Activated CD8-positive, alpha-beta memory T cell treated with anti-CD3 and anti-CD28 coated beads, Interleukin-2, amount 10 ng/mL, durations not matched to agents 7 days and 5 days (primary cell): ENCODE measurements at regions of chrX and their contacts with region 1.

Region 1: GRCh38 chrX:150587585-150588503 is 19.4 kb downstream of the MTM1 start:
- DNase-seq: peak; percentile 59
- ATAC-seq: peak; percentile 47
- H3K4me3 Mint-ChIP-seq: no peak overlapping the region
- H3K27ac Mint-ChIP-seq: no peak overlapping the region
- H3K4me1 Mint-ChIP-seq: peaks cover 22% of the 10 kb centered on the region
- H3K27me3 Mint-ChIP-seq: no peaks in the 10 kb centered on the region

Region 2: DNA sequence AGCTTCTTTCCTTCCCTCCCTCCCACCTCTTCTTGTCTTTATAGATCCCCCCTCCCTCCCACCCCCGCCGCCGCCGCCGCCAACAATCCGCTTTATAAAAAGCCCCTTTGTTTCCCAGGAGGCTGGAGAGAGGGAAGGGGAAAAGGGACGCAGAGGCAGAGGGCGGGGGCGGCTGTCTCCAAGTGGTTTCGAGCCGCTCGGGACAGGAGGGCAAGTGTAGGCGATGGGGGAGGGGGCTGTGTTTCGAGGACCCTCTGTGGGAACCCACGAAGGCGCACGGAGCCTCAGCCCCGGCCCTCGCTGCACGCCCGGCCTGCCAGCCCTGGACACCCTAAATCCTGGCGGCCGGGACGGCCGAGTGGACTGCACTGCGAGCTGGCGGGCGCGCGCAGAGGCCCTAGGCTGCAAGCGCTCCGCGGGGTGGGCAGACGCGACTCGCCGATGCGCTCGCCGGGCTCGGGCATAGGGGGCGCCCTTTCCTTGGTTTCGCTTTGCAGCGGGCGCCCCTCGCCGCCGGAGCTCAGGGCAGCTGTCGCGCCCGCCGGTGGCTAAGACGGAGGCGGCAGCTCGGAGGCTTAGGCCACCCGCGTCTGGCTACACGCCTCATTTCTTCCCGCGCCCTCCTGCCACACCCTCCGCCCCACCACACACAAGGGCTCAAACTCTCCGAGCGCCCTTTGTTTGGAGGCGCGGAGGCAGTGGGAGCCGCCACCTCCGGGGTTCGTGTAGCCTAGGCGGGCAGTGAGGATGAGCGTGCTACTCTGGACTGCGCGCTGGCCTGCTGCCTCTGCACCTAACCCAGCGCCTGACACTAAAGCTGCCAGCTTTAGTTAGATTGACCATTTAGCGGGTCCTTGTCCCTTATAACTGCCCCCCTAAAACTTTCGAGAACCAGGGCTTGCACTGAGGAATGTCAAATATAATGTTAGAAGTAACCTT is 222.5 kb before region 1 on chrX:
- CTCF ChIA-PET with region 1: interaction called, 11 read pairs
- DNase-seq: peak; percentile 79
- ATAC-seq: peak; percentile 46
- H3K4me3 Mint-ChIP-seq: peak overlapping the region; percentile 77
- H3K27ac Mint-ChIP-seq: peak overlapping the region; percentile 74
- H3K4me1 Mint-ChIP-seq: peaks cover 24% of the 10 kb centered on the region
- H3K27me3 Mint-ChIP-seq: peaks cover 19% of the 10 kb centered on the region

Region 3: DNA sequence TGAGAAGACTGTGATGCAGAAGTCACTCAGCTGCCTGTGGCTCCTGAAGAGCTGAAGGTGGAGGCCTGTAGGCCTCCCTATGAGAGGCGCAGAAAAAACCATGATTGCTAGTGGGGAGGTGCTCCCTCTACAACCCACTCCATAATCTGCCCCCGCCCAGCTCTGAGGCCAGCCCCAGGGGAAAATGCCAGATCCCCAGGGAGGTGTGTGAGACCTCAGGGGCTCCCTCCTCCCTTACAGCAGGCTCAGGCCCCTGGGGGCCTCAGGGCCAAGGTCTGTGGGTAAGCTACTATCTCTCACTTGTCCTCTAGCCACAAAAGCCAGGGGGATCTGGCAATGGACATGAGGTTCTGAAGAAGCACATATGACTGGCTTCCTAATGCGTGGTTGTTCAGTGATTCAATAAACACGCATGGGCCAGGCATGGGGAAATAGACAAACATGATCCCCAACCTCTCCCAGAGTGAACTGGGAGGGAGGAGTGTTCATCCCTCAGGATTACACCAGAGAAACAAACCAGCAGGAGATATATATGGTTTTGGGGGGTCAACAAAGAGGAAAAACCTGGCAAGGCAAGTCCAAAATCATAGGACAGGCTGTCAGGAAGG is 70.4 kb before region 1 on chrX:
- CTCF ChIA-PET with region 1: no interaction called
- DNase-seq: no peak
- ATAC-seq: no peak
- H3K4me3 Mint-ChIP-seq: no peak overlapping the region
- H3K27ac Mint-ChIP-seq: no peak overlapping the region
- H3K4me1 Mint-ChIP-seq: peaks cover 7% of the 10 kb centered on the region
- H3K27me3 Mint-ChIP-seq: no peaks in the 10 kb centered on the region

Region 4: GRCh38 chrX:150570512-150570911 is 17.3 kb before region 1 on chrX:
- CTCF ChIA-PET with region 1: interaction called, 11 read pairs
- DNase-seq: no peak
- ATAC-seq: no peak
- H3K4me3 Mint-ChIP-seq: peak overlapping the region; percentile 81
- H3K27ac Mint-ChIP-seq: peak overlapping the region; percentile 90
- H3K4me1 Mint-ChIP-seq: peaks cover 55% of the 10 kb centered on the region
- H3K27me3 Mint-ChIP-seq: no peaks in the 10 kb centered on the region

Region 5: DNA sequence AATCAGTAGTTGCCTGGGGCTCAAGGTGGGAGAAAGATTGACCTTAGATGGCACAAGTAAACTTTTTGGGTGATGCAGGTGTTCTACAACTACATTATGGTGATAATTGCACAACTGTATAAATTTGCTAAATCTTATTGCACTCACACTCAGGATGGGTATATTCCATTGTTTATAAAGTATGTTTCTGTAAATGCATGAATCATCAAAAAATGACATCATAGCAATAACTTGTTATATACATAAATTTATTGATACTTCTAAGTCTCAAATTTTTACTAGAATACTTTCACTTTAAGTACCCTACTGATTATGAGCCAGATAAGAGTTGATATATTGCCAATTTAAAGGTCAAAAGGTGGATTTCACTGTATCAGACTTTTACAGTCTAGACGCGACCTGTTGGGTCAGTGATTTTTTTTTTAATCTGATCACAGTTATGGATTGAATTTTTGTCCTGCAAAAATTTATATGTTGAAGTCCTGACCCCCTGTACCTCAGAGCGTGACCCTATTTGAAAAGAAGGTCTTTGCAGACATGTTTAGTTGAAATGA is 67.9 kb after region 1 on chrX:
- CTCF ChIA-PET with region 1: no interaction called
- DNase-seq: no peak
- ATAC-seq: no peak
- H3K4me3 Mint-ChIP-seq: no peak overlapping the region
- H3K27ac Mint-ChIP-seq: no peak overlapping the region
- H3K4me1 Mint-ChIP-seq: no peaks in the 10 kb centered on the region
- H3K27me3 Mint-ChIP-seq: no peaks in the 10 kb centered on the region